ENCODE measurements at regions of chr1 and their contacts with region 1.

Region 1: GRCh38 chr1:68938051-68938666 is 441.3 kb upstream of the DEPDC1 start:
- DNase-seq: no peak
- ATAC-seq: no peak
- H3K4me3 ChIP-seq: no peak overlapping the region
- H3K4me3 Mint-ChIP-seq: no peak overlapping the region
- H3K27ac ChIP-seq: no peak overlapping the region
- H3K27ac Mint-ChIP-seq: no peak overlapping the region
- H3K4me1 ChIP-seq: no peaks in the 10 kb centered on the region
- H3K4me1 Mint-ChIP-seq: no peaks in the 10 kb centered on the region
- H3K27me3 ChIP-seq: no peaks in the 10 kb centered on the region
- H3K27me3 Mint-ChIP-seq: no peaks in the 10 kb centered on the region

Region 2: DNA sequence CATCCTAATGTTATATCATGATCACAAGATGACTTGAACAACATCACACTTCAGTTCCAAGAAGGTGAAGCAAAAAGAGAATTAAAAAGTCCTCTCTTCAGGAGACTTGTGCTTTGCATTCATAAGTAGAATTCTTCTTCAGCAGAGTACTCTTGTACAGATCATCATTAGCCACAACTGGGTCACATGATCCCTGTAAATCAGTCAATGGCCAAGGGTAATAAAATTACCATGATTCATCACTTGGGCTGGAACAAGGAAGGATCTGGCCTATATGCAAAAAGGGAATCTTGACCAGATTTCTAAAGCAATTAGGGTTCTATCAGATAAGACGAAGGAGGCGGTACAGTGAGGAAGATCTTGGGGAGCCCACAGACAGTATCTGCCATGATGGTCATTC is 16.7 kb after region 1 on chr1:
- CTCF ChIA-PET with region 1: no interaction called
- POLR2A ChIA-PET with region 1: no interaction called
- DNase-seq: no peak
- ATAC-seq: no peak
- H3K4me3 ChIP-seq: no peak overlapping the region
- H3K4me3 Mint-ChIP-seq: no peak overlapping the region
- H3K27ac ChIP-seq: no peak overlapping the region
- H3K27ac Mint-ChIP-seq: no peak overlapping the region
- H3K4me1 ChIP-seq: no peaks in the 10 kb centered on the region
- H3K4me1 Mint-ChIP-seq: no peaks in the 10 kb centered on the region
- H3K27me3 ChIP-seq: no peaks in the 10 kb centered on the region
- H3K27me3 Mint-ChIP-seq: no peaks in the 10 kb centered on the region

Region 3: GRCh38 chr1:69038379-69038778 is 100.2 kb after region 1 on chr1:
- CTCF ChIA-PET with region 1: no interaction called
- POLR2A ChIA-PET with region 1: interaction called in 1 of 2 experiments, 10 read pairs
- DNase-seq: no peak
- ATAC-seq: no peak
- H3K4me3 ChIP-seq: no peak overlapping the region
- H3K4me3 Mint-ChIP-seq: no peak overlapping the region
- H3K27ac ChIP-seq: no peak overlapping the region
- H3K27ac Mint-ChIP-seq: no peak overlapping the region
- H3K4me1 ChIP-seq: no peaks in the 10 kb centered on the region
- H3K4me1 Mint-ChIP-seq: no peaks in the 10 kb centered on the region
- H3K27me3 ChIP-seq: no peaks in the 10 kb centered on the region
- H3K27me3 Mint-ChIP-seq: no peaks in the 10 kb centered on the region

Region 4: GRCh38 chr1:69121723-69122122 is 183.6 kb after region 1 on chr1:
- CTCF ChIA-PET with region 1: no interaction called
- POLR2A ChIA-PET with region 1: no interaction called
- DNase-seq: no peak
- ATAC-seq: no peak
- H3K4me3 ChIP-seq: no peak overlapping the region
- H3K4me3 Mint-ChIP-seq: no peak overlapping the region
- H3K27ac ChIP-seq: no peak overlapping the region
- H3K27ac Mint-ChIP-seq: no peak overlapping the region
- H3K4me1 ChIP-seq: no peaks in the 10 kb centered on the region
- H3K4me1 Mint-ChIP-seq: no peaks in the 10 kb centered on the region
- H3K27me3 ChIP-seq: no peaks in the 10 kb centered on the region
- H3K27me3 Mint-ChIP-seq: no peaks in the 10 kb centered on the region